ENCODE measurements at regions of chr20 and their contacts with region 1.

Region 1: GRCh38 chr20:17938871-17939619 is 29.5 kb downstream of the SNX5 start:
- DNase-seq: peak; percentile 70
- H3K4me3 ChIP-seq: no peak overlapping the region
- H3K27ac ChIP-seq: no peak overlapping the region
- H3K4me1 ChIP-seq: peaks cover 14% of the 10 kb centered on the region
- H3K27me3 ChIP-seq: no peaks in the 10 kb centered on the region
- CTCF ChIP-seq: peak; percentile 85 to 97
- POLR2A ChIP-seq: peak; percentile 14

Region 2: GRCh38 chr20:17530716-17531664 is 408.1 kb before region 1 on chr20 and contains the start of gene BFSP1:
- CTCF ChIA-PET with region 1: interaction called, 5 read pairs
- POLR2A ChIA-PET with region 1: no interaction called
- dilution Hi-C with region 1: no loop called
- intact Hi-C with region 1: loop called (anchors 5 kb)
- DNase-seq: peak; percentile 72
- H3K4me3 ChIP-seq: peak within 1 kb of the TSS; percentile 16 to 47 (median 45)
- H3K27ac ChIP-seq: peak within 1 kb of the TSS; percentile 41
- H3K4me1 ChIP-seq: peaks cover 15% of the 10 kb centered on the region
- H3K27me3 ChIP-seq: no peaks in the 10 kb centered on the region
- CTCF ChIP-seq: no peak
- POLR2A ChIP-seq: peak; percentile 41
- total RNA-seq, gene BFSP1: 3.7 and 5.2 TPM in 2 replicates

Region 3: GRCh38 chr20:17654649-17655285 is 284.3 kb before region 1 on chr20:
- CTCF ChIA-PET with region 1: interaction called, 19 read pairs
- POLR2A ChIA-PET with region 1: no interaction called
- dilution Hi-C with region 1: no loop called
- intact Hi-C with region 1: loop called (anchors 1 kb)
- DNase-seq: peak; percentile 66
- H3K4me3 ChIP-seq: no peak overlapping the region
- H3K27ac ChIP-seq: peak overlapping the region; percentile 29
- H3K4me1 ChIP-seq: peaks cover 5% of the 10 kb centered on the region
- H3K27me3 ChIP-seq: no peaks in the 10 kb centered on the region
- CTCF ChIP-seq: peak; percentile 75 to 78
- POLR2A ChIP-seq: no peak

Region 4: GRCh38 chr20:17708670-17709360 is 230.2 kb before region 1 on chr20:
- CTCF ChIA-PET with region 1: no interaction called
- POLR2A ChIA-PET with region 1: no interaction called
- dilution Hi-C with region 1: no loop called
- intact Hi-C with region 1: no loop called
- DNase-seq: no peak
- H3K4me3 ChIP-seq: no peak overlapping the region
- H3K27ac ChIP-seq: no peak overlapping the region
- H3K4me1 ChIP-seq: no peaks in the 10 kb centered on the region
- H3K27me3 ChIP-seq: peaks cover 2% of the 10 kb centered on the region in 2 experiments
- CTCF ChIP-seq: no peak
- POLR2A ChIP-seq: no peak

Region 5: GRCh38 chr20:17958373-17959256 is 19.6 kb after region 1 on chr20:
- CTCF ChIA-PET with region 1: interaction called, 19 read pairs
- POLR2A ChIA-PET with region 1: no interaction called
- dilution Hi-C with region 1: no loop called
- intact Hi-C with region 1: no loop called
- DNase-seq: peak; percentile 75
- H3K4me3 ChIP-seq: no peak overlapping the region
- H3K27ac ChIP-seq: no peak overlapping the region
- H3K4me1 ChIP-seq: peaks cover 49% of the 10 kb centered on the region
- H3K27me3 ChIP-seq: no peaks in the 10 kb centered on the region
- CTCF ChIP-seq: no peak
- POLR2A ChIP-seq: peak; percentile 19

Region 6: DNA sequence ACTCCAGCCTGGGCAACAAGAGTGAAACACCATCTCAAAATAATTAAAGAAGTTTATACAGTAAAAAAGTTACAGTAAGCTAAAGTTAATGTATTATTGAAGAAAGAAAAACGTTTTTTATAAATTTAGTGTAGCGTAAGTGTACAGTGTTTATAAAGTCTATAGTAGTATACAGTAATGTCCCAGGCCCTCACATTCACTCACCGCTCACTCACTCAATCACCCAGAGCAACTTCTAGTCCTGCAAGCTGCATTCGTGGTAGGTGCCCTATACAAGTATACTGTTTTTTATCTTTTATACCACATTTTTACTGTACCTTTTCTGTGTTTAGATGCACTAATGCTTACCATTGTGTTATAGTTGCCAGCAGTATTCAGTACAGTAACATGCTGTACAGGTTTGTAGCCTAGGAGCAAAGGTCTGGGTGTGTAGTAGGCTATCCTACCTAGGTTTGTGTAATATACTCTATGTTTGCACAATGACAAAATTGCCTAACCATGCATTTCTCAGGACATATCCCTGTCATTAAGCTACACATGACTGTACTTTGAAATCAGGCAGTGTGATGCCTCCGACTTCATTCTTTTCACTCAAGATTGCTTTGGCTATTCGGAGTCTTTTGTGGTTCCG is 46.5 kb after region 1 on chr20:
- CTCF ChIA-PET with region 1: no interaction called
- POLR2A ChIA-PET with region 1: no interaction called
- dilution Hi-C with region 1: no loop called
- intact Hi-C with region 1: no loop called
- DNase-seq: no peak
- H3K4me3 ChIP-seq: no peak overlapping the region
- H3K27ac ChIP-seq: no peak overlapping the region
- H3K4me1 ChIP-seq: no peaks in the 10 kb centered on the region
- H3K27me3 ChIP-seq: no peaks in the 10 kb centered on the region
- CTCF ChIP-seq: no peak
- POLR2A ChIP-seq: no peak